ENCODE measurements at regions of chr9 and their contacts with region 1.

Region 1: GRCh38 chr9:92954049-92954861 is 6.9 kb downstream of the FGD3 start:
- DNase-seq: peak; percentile 61 to 95 (median 80)
- ATAC-seq: peak; percentile 90
- H3K4me3 ChIP-seq: peak overlapping the region; percentile 55
- H3K4me3 Mint-ChIP-seq: peak overlapping the region; percentile 92
- H3K27ac ChIP-seq: peak overlapping the region; percentile 67 to 90
- H3K27ac Mint-ChIP-seq: peak overlapping the region; percentile 98
- H3K4me1 ChIP-seq: peaks cover 91% of the 10 kb centered on the region
- H3K4me1 Mint-ChIP-seq: peaks cover 89% of the 10 kb centered on the region
- H3K27me3 ChIP-seq: no peaks in the 10 kb centered on the region
- H3K27me3 Mint-ChIP-seq: no peaks in the 10 kb centered on the region
- CTCF ChIP-seq: no peak

Region 2: DNA sequence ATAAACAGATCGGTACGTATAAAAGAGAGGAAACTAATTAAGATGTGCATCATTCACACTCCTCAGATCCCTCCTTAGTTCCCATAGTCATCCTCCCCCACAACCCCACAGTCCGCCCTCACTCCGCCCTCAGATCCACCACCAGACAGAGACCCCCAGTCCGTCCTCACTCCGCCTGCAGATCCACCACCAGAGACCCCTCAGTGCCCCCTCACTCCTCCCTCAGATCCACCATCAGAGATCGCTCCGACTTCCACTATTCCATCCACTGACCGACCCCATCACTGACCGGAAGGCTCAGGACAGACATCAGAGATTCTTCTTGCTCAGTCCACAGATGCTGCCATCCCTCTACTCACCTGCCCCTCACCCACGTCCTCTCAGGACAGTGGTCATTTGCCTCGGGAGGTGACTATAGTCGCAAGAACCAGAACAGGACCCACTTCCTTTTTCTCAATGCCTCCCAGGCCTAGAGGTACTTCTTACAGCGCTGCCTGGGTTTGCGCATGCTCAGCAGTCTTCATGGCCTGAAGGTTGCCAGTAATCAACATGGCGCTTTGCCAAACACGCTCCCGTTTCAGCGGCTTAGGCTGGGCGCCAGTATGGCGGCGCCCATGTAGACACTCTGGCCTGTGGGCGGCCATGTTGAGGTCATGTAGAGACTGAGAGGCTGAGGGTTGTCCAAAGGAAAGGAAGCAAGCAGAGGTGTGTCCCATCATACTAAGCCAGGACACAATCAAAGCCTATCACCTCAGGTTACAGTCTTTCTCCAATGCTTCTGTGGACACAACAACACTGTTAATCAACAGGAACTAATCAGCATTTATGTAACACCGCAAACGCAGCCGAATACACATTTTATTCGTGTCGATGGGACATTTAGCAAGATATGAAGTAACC is 76.5 kb before region 1 on chr9 and contains the start of gene ZNF484:
- CTCF ChIA-PET with region 1: interaction called, 3 read pairs
- POLR2A ChIA-PET with region 1: interaction called, 3 read pairs
- intact Hi-C with region 1: loop called in 1 of 2 experiments (anchors 5 kb)
- DNase-seq: peak; percentile 94 to 100 (median 98)
- ATAC-seq: peak; percentile 96
- H3K4me3 ChIP-seq: peak within 1 kb of the TSS; percentile 72
- H3K4me3 Mint-ChIP-seq: peak within 1 kb of the TSS; percentile 98
- H3K27ac ChIP-seq: peak within 1 kb of the TSS; percentile 61 to 78
- H3K27ac Mint-ChIP-seq: peak within 1 kb of the TSS; percentile 96
- H3K4me1 ChIP-seq: peaks cover 8% of the 10 kb centered on the region
- H3K4me1 Mint-ChIP-seq: peaks cover 61% of the 10 kb centered on the region
- H3K27me3 ChIP-seq: no peaks in the 10 kb centered on the region
- H3K27me3 Mint-ChIP-seq: no peaks in the 10 kb centered on the region
- CTCF ChIP-seq: no peak
- total RNA-seq, gene ZNF484: 13.3 to 13.6 TPM

Region 3: DNA sequence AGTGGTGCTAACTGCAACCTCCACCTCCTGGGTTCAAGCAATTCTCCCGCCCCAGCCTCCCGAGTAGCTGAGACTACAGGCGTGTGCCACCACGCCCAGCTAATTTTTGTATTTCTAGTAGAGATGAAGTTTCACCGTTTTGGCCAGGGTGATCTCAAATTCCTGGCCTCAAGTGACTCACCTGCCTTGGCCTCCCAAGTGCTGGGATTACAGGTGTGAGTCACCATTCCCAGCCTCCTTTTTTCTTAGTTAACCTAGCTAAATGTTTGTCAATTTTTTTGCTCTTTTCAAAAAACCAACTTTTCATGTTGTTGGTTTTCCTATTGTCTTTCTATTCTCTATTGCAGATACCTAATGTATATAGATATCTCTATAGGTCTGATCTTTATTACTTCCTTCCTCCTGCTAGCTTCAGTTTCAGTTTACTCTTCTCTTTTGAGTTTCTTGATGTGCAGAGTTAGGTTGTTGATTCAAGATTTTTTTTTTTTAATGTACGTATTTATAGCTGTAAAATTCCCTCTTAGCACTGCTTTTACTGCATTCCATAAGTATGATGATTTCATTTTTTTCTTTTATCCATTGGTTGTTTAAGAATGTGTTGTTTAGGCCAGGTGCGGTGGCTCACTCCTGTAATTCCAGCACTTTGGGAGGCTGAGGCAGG is 26.0 kb after region 1 on chr9:
- CTCF ChIA-PET with region 1: interaction called, 10 read pairs
- POLR2A ChIA-PET with region 1: interaction called, 4 read pairs
- intact Hi-C with region 1: no loop called
- DNase-seq: peak in 2 of 14 experiments; percentile 35 to 45
- ATAC-seq: peak; percentile 47
- H3K4me3 ChIP-seq: no peak overlapping the region
- H3K4me3 Mint-ChIP-seq: peak overlapping the region; percentile 34
- H3K27ac ChIP-seq: peak overlapping the region; percentile 49 to 59
- H3K27ac Mint-ChIP-seq: peak overlapping the region; percentile 81
- H3K4me1 ChIP-seq: peaks cover 56% of the 10 kb centered on the region
- H3K4me1 Mint-ChIP-seq: peaks cover 72% of the 10 kb centered on the region
- H3K27me3 ChIP-seq: no peaks in the 10 kb centered on the region
- H3K27me3 Mint-ChIP-seq: no peaks in the 10 kb centered on the region
- CTCF ChIP-seq: no peak

Region 4: GRCh38 chr9:93028448-93029006 is 74.3 kb after region 1 on chr9:
- CTCF ChIA-PET with region 1: interaction called, 3 read pairs
- POLR2A ChIA-PET with region 1: interaction called, 20 read pairs
- intact Hi-C with region 1: no loop called
- DNase-seq: peak; percentile 54 to 94 (median 68)
- ATAC-seq: peak; percentile 85
- H3K4me3 ChIP-seq: peak overlapping the region; percentile 60
- H3K4me3 Mint-ChIP-seq: peak overlapping the region; percentile 91
- H3K27ac ChIP-seq: peak overlapping the region; percentile 92 to 95
- H3K27ac Mint-ChIP-seq: peak overlapping the region; percentile 99
- H3K4me1 ChIP-seq: peaks cover 99% of the 10 kb centered on the region
- H3K4me1 Mint-ChIP-seq: peaks cover 80% of the 10 kb centered on the region
- H3K27me3 ChIP-seq: no peaks in the 10 kb centered on the region
- H3K27me3 Mint-ChIP-seq: no peaks in the 10 kb centered on the region
- CTCF ChIP-seq: no peak

Region 5: GRCh38 chr9:93302551-93303257 is 348.4 kb after region 1 on chr9:
- CTCF ChIA-PET with region 1: interaction called, 4 read pairs
- POLR2A ChIA-PET with region 1: no interaction called
- intact Hi-C with region 1: loop called (anchors 1 to 2 kb)
- DNase-seq: peak; percentile 36 to 82 (median 58)
- ATAC-seq: peak; percentile 91
- H3K4me3 ChIP-seq: no peak overlapping the region
- H3K4me3 Mint-ChIP-seq: no peak overlapping the region
- H3K27ac ChIP-seq: no peak overlapping the region
- H3K27ac Mint-ChIP-seq: no peak overlapping the region
- H3K4me1 ChIP-seq: peaks cover 8% of the 10 kb centered on the region
- H3K4me1 Mint-ChIP-seq: peaks cover 2% of the 10 kb centered on the region
- H3K27me3 ChIP-seq: no peaks in the 10 kb centered on the region
- H3K27me3 Mint-ChIP-seq: no peaks in the 10 kb centered on the region
- CTCF ChIP-seq: peak; percentile 59

Measured in CD4-positive, alpha-beta T cell (primary cell).